ENCODE measurements at regions of chr1 and their contacts with region 1.

Region 1: GRCh38 chr1:26787706-26788514 is at the start of gene PIGV:
- DNase-seq: peak; percentile 91
- ATAC-seq: peak; percentile 50
- H3K4me3 Mint-ChIP-seq: peak within 1 kb of the TSS; percentile 97
- H3K27ac Mint-ChIP-seq: peak within 1 kb of the TSS; percentile 99
- H3K4me1 Mint-ChIP-seq: peaks cover 78% of the 10 kb centered on the region
- H3K27me3 Mint-ChIP-seq: no peaks in the 10 kb centered on the region
- CTCF ChIP-seq: no peak
- total RNA-seq, gene PIGV: 21.2 to 23.9 TPM

Region 2: DNA sequence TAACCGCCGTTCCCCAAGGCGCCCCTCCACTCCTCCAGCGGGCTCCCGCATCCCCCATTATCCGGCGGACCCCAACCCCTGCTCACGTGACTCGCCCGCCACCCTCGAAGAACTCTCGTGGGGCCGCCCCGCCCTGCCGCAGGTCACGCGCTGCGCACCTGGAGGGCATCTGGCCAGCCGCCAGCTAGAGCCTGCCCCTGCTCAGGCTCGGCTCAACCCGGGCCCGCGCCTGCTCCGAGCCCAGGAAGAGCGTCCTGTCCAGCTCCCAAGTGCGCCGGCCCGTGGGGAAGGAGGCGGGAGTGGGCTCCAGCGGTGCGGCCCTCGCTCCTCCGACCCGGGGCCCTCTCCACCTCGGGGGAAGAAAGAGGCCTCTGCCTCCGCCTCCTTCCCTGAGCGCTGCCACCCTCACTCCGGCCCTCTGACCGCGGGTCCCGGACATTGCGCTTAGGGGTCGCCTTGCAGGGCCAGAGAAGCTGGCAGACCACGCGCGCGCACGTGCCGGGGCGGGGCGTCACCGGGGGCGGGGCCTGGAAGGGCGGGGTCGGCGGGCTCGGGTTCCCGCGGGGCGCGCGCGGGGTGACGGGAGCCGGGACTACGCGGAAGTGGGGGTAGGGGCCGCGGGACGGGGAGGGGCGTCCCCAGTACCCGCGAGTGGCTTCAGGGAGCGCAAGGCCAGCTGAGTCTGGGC is 287.3 kb before region 1 on chr1:
- CTCF ChIA-PET with region 1: interaction called, 25 read pairs
- POLR2A ChIA-PET with region 1: interaction called, 10 read pairs
- intact Hi-C with region 1: no loop called
- DNase-seq: peak; percentile 91
- ATAC-seq: peak; percentile 78
- H3K4me3 Mint-ChIP-seq: peak overlapping the region; percentile 90
- H3K27ac Mint-ChIP-seq: peak overlapping the region; percentile 94
- H3K4me1 Mint-ChIP-seq: peaks cover 17% of the 10 kb centered on the region
- H3K27me3 Mint-ChIP-seq: no peaks in the 10 kb centered on the region
- CTCF ChIP-seq: peak; percentile 53

Region 3: DNA sequence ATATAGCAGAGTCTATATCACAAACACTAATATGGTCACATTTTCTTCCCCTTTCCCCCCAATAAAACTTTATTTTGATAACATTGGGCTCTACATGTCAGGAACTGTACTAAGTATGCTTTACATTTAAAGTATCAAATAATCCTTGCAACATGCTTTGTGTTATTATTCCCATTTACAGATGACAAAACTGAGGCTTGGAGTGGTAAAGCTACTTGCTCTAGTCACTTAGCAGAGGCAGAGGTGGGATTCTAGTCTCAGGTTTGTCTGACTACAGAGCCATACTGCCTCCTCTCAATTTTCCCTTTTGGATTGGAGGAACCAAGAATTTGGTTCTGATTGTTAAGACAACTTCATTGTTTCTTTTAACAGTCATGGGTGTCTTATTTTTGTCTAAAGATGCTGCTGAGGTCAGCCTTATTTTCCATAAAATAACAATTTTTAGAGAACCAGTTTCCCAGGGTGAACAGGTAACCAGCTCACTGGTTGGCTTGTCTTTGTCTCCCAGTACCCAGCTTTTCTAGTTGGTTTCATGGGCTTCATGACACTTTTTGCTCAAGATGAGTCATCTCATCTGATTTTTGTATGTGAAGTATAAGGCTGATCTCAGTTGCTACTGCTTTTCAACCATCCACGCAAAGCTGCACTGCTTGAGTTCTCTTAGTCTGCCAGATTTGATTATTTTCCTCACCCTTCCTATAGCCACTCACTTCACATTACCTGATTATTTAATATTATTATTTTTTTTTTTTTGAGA is 173.1 kb before region 1 on chr1:
- CTCF ChIA-PET with region 1: interaction called, 11 read pairs
- POLR2A ChIA-PET with region 1: interaction called, 27 read pairs
- intact Hi-C with region 1: no loop called
- DNase-seq: no peak
- ATAC-seq: no peak
- H3K4me3 Mint-ChIP-seq: no peak overlapping the region
- H3K27ac Mint-ChIP-seq: no peak overlapping the region
- H3K4me1 Mint-ChIP-seq: peaks cover 29% of the 10 kb centered on the region
- H3K27me3 Mint-ChIP-seq: no peaks in the 10 kb centered on the region
- CTCF ChIP-seq: no peak

Region 4: GRCh38 chr1:26700711-26701110 is 87.2 kb before region 1 on chr1:
- CTCF ChIA-PET with region 1: interaction called, 126 read pairs
- POLR2A ChIA-PET with region 1: interaction called, 283 read pairs
- intact Hi-C with region 1: loop called (anchors 5 kb)
- DNase-seq: peak; percentile 26
- ATAC-seq: no peak
- H3K4me3 Mint-ChIP-seq: no peak overlapping the region
- H3K27ac Mint-ChIP-seq: no peak overlapping the region
- H3K4me1 Mint-ChIP-seq: peaks cover 5% of the 10 kb centered on the region
- H3K27me3 Mint-ChIP-seq: no peaks in the 10 kb centered on the region
- CTCF ChIP-seq: no peak

Region 5: DNA sequence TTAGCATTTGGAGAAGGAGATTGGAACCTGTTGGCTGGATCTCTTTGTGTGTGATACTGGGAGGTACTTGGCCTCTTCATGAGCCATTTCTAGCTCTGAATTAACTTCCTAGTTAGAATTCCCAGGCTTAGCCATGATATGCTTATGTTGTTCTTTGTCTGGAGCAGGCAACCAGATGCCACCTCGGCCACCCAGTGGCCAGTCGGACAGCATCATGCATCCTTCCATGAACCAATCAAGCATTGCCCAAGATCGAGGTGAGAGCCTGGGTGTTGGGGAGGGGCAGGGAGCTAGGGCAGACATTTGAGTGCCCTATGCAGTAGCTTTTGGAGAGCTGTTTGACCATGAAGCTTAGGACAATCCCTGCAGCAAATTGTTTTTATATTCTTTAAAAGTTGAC is 26.7 kb before region 1 on chr1:
- CTCF ChIA-PET with region 1: interaction called, 20 read pairs
- POLR2A ChIA-PET with region 1: interaction called, 30 read pairs
- intact Hi-C with region 1: no loop called
- DNase-seq: no peak
- ATAC-seq: no peak
- H3K4me3 Mint-ChIP-seq: no peak overlapping the region
- H3K27ac Mint-ChIP-seq: no peak overlapping the region
- H3K4me1 Mint-ChIP-seq: peaks cover 27% of the 10 kb centered on the region
- H3K27me3 Mint-ChIP-seq: no peaks in the 10 kb centered on the region
- CTCF ChIP-seq: no peak

Region 6: DNA sequence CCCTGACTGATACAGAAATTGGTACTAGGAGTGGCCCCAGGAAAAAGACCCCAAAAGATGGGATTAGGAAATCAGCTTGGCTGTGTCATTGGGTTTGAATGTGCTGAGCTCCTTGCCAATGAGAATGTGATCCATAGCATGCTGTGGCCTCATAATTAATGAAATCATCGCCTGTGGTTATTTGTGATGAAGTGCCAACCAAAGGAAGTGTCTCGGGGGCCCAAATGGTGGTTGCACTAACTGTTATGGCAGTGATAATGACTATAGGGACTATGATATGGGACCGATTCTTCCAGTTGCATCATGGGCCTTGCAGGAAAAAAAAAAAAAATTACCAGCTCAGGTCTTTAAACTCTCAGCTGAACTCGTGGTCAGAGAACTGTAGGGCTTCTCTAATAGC is 23.1 kb after region 1 on chr1:
- CTCF ChIA-PET with region 1: interaction called, 41 read pairs
- POLR2A ChIA-PET with region 1: interaction called, 8 read pairs
- intact Hi-C with region 1: no loop called
- DNase-seq: peak; percentile 37
- ATAC-seq: no peak
- H3K4me3 Mint-ChIP-seq: no peak overlapping the region
- H3K27ac Mint-ChIP-seq: peak overlapping the region; percentile 55
- H3K4me1 Mint-ChIP-seq: peaks cover 22% of the 10 kb centered on the region
- H3K27me3 Mint-ChIP-seq: no peaks in the 10 kb centered on the region
- CTCF ChIP-seq: no peak